Activated CD8-positive, alpha-beta memory T cell treated with anti-CD3 and anti-CD28 coated beads, Interleukin-2, amount 10 ng/mL, durations not matched to agents 7 days and 5 days (primary cell): ENCODE measurements at regions of chr5 and their contacts with region 1.

Region 1: GRCh38 chr5:172714491-172715421 is 56.2 kb downstream of the DUSP1 start:
- DNase-seq: peak; percentile 75
- ATAC-seq: peak; percentile 87
- H3K4me3 Mint-ChIP-seq: no peak overlapping the region
- H3K27ac Mint-ChIP-seq: no peak overlapping the region
- H3K4me1 Mint-ChIP-seq: no peaks in the 10 kb centered on the region
- H3K27me3 Mint-ChIP-seq: peaks cover 4% of the 10 kb centered on the region

Region 2: DNA sequence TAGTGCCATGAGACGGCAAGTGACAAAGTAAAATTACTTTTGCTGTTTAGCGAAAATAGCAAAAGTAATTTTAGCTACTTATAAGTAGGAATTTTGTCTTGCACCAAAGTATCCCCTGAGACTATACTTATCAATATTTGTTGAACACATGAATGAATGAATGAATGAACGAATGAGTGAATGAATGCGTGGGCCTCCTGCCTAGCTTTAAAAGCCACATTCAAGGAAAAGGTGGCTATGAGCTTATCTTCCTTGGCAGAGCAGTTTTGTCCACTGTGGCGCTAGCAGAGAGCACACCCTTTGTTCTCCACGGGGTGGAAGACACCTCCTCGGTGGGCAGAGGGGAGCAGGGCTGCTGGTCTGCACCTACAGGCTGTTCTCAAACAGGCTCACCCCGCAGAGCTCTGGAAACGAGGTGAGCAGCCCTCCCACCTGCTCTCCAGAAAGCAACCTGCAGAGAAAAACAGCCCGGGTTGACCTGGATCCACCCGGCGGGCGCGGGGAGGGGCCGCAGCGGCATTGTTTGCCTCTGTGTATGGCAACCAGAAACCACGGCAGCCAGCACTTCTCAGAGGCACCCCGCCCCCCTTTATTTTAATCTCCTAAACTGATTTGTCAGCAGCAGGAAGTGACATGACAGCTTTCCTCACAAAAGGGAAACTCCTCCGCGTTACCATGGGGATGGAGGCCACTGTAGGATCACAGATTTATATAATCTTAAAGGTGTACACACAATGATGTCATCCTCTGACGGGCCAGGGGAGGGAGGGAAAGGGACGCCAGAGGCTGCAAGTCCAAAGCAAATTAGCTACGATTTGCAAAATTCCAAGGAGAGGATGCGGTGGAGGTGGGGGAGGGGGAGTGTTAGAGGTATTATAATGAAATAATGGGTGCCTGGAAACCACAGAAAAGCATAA is 50.4 kb after region 1 on chr5:
- CTCF ChIA-PET with region 1: interaction called, 30 read pairs
- DNase-seq: peak; percentile 98
- ATAC-seq: peak; percentile 74
- H3K4me3 Mint-ChIP-seq: peak overlapping the region; percentile 77
- H3K27ac Mint-ChIP-seq: peak overlapping the region; percentile 90
- H3K4me1 Mint-ChIP-seq: peaks cover 28% of the 10 kb centered on the region
- H3K27me3 Mint-ChIP-seq: no peaks in the 10 kb centered on the region

Region 3: GRCh38 chr5:172770675-172771438 is 56.1 kb after region 1 on chr5 and contains the start of gene DUSP1:
- CTCF ChIA-PET with region 1: interaction called, 30 read pairs
- DNase-seq: peak; percentile 98
- ATAC-seq: peak; percentile 63
- H3K4me3 Mint-ChIP-seq: peak within 1 kb of the TSS; percentile 82
- H3K27ac Mint-ChIP-seq: peak within 1 kb of the TSS; percentile 99
- H3K4me1 Mint-ChIP-seq: peaks cover 35% of the 10 kb centered on the region
- H3K27me3 Mint-ChIP-seq: no peaks in the 10 kb centered on the region
- total RNA-seq, gene DUSP1: 6.5 to 32.5 TPM

Region 4: GRCh38 chr5:172958331-172959046 is 243.7 kb after region 1 on chr5:
- CTCF ChIA-PET with region 1: interaction called, 18 read pairs
- DNase-seq: peak; percentile 71
- ATAC-seq: peak; percentile 77
- H3K4me3 Mint-ChIP-seq: peak overlapping the region; percentile 92
- H3K27ac Mint-ChIP-seq: peak overlapping the region; percentile 95
- H3K4me1 Mint-ChIP-seq: peaks cover 22% of the 10 kb centered on the region
- H3K27me3 Mint-ChIP-seq: peaks cover 3% of the 10 kb centered on the region

Region 5: DNA sequence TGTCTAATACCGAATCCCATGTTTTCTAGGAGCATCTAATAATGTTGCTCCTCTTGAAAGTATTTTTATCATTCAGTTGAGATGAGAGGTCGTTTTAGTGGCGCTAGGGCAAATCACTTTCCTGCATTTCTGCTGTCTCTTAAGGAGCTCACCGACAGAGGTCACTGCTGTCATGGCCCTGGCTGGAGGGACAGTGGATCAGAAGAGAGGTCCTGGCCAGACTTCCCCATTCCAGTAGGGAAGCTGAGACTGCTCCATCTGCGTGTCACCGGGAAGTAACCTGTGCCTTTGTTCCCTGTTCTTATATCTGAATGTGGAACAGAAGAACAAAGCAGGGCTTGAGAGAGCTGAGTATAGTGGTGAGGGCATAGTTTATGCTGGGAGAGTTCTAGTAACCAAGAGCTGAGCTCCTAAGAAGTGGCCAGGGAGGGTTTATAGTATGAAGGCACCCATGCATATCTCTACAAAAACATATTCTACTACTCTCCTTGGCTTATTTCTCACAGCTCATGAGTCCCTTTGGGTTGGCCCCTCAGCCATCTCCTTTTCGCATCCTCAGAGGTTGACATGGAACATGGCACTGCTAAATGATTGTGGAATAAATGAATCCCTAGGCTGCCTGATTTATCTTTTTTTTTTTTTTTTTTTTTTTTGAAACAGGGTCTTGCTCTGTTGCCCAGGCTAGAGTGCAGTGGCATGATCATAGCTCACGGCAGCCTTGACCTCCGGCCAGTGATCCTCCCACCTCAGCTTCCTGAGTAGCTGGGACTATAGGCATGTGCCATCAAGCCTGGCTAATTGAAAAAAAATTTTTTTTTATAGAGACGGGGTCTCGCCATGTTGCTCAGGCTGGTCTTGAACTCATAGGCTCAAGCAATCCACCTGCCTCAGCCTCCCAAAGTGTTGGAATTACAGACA is 296.1 kb after region 1 on chr5:
- CTCF ChIA-PET with region 1: no interaction called
- DNase-seq: no peak
- ATAC-seq: no peak
- H3K4me3 Mint-ChIP-seq: no peak overlapping the region
- H3K27ac Mint-ChIP-seq: no peak overlapping the region
- H3K4me1 Mint-ChIP-seq: peaks cover 17% of the 10 kb centered on the region
- H3K27me3 Mint-ChIP-seq: no peaks in the 10 kb centered on the region